CD8-positive, alpha-beta T cell (primary cell): ENCODE measurements at regions of chr6 and their contacts with region 1.

Region 1: DNA sequence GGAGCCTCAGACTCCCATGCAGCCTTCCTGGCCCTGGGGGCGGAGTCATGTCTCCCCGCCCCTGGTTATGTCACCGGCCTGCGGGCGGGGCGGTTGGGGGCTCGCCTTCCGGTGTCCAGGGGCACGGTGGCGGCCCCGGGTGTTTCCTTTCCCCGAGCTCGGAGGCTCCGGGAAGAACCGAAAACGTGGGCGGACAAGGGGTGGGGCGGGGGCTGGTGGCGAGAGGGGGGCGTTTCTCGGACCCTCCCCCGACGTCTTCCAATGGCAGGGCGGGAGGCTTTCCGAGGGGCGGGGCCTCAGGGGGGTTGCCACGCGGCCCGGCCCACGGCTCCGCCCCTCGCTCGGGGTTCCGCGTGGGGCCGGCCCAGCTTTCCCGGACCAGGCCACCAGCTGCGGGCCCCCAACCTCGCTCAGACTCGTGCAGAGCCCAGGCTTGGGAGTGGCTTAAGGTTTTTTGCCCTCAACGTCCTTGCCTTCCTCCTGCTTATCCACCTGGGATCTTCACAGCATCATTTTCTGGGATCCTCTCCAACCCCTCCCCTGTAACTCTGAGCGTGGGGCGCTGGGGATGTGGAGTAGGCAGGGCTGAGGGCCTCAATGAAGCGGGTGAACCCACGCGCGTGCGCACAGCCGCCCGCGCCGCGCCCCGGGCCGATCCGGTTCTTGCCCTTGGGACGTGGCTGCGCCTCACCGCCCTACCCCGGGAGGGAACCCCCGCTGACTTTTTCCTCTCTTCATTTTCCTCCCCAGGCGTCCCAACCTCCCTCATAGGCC is 2.1 kb upstream of the NRN1 start:
- DNase-seq: peak in 4 of 9 experiments; percentile 29 to 64 (median 46)
- ATAC-seq: peak; percentile 47
- H3K4me3 ChIP-seq: peak overlapping the region; percentile 44 to 47
- H3K4me3 Mint-ChIP-seq: peak overlapping the region; percentile 64
- H3K27ac ChIP-seq: no peak overlapping the region
- H3K27ac Mint-ChIP-seq: no peak overlapping the region
- H3K4me1 ChIP-seq: peaks cover 39% of the 10 kb centered on the region
- H3K4me1 Mint-ChIP-seq: peaks cover 37% of the 10 kb centered on the region
- H3K27me3 ChIP-seq: peaks cover 45 to 46% of the 10 kb centered on the region in 2 experiments
- H3K27me3 Mint-ChIP-seq: peaks cover 70% of the 10 kb centered on the region
- CTCF ChIP-seq: no peak

Region 2: GRCh38 chr6:5464099-5464885 is 544.5 kb before region 1 on chr6:
- CTCF ChIA-PET with region 1: no interaction called
- POLR2A ChIA-PET with region 1: no interaction called
- intact Hi-C with region 1: no loop called
- DNase-seq: no peak
- ATAC-seq: no peak
- H3K4me3 ChIP-seq: no peak overlapping the region
- H3K4me3 Mint-ChIP-seq: no peak overlapping the region
- H3K27ac ChIP-seq: no peak overlapping the region
- H3K27ac Mint-ChIP-seq: no peak overlapping the region
- H3K4me1 ChIP-seq: peaks cover 4% of the 10 kb centered on the region
- H3K4me1 Mint-ChIP-seq: peaks cover 14% of the 10 kb centered on the region
- H3K27me3 ChIP-seq: no peaks in the 10 kb centered on the region
- H3K27me3 Mint-ChIP-seq: no peaks in the 10 kb centered on the region
- CTCF ChIP-seq: no peak

Region 3: DNA sequence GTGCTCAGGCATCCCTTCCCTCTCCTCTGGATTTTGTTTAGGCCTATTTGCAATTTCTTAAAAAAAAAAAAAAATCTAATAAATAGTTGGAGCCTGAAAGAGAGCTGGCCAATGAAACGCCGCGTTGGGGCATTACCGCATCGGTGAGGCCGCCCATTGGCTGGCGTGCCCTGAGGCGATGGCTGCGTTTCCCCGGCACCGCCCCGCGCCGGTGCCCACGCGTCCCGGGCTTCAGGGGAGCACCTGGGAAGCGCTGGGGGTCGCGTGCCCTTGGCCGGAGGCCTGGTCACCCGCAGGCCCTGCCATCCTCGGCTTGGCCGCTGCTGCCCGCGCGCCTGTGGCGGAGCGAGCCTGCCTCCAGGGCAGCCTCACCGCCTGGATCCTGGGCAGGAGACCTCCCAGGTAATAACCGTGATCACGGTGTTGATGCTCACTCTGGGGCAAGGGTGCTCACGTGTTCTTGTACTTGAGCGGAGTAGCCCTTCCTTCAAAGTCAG is 157.5 kb before region 1 on chr6:
- CTCF ChIA-PET with region 1: no interaction called
- POLR2A ChIA-PET with region 1: no interaction called
- intact Hi-C with region 1: loop called in 1 of 2 experiments (anchors 5 kb)
- DNase-seq: peak; percentile 36 to 83 (median 67)
- ATAC-seq: peak; percentile 98
- H3K4me3 ChIP-seq: peak overlapping the region; percentile 59 to 71
- H3K4me3 Mint-ChIP-seq: peak overlapping the region; percentile 81
- H3K27ac ChIP-seq: peak overlapping the region; percentile 46 to 63
- H3K27ac Mint-ChIP-seq: peak overlapping the region; percentile 49
- H3K4me1 ChIP-seq: peaks cover 12% of the 10 kb centered on the region
- H3K4me1 Mint-ChIP-seq: peaks cover 7% of the 10 kb centered on the region
- H3K27me3 ChIP-seq: no peaks in the 10 kb centered on the region
- H3K27me3 Mint-ChIP-seq: peaks cover 2% of the 10 kb centered on the region
- CTCF ChIP-seq: no peak

Region 4: GRCh38 chr6:5995949-5996713 is 12.7 kb before region 1 on chr6:
- CTCF ChIA-PET with region 1: interaction called, 3 read pairs
- POLR2A ChIA-PET with region 1: interaction called, 3 read pairs
- intact Hi-C with region 1: loop called in 1 of 2 experiments (anchors 1 kb)
- DNase-seq: peak in 2 of 9 experiments; percentile 21 to 35
- ATAC-seq: peak; percentile 22
- H3K4me3 ChIP-seq: peak overlapping the region; percentile 52 to 59
- H3K4me3 Mint-ChIP-seq: peak overlapping the region; percentile 92
- H3K27ac ChIP-seq: no peak overlapping the region
- H3K27ac Mint-ChIP-seq: no peak overlapping the region
- H3K4me1 ChIP-seq: peaks cover 52% of the 10 kb centered on the region
- H3K4me1 Mint-ChIP-seq: peaks cover 51% of the 10 kb centered on the region
- H3K27me3 ChIP-seq: peaks cover 69 to 77% of the 10 kb centered on the region in 2 experiments
- H3K27me3 Mint-ChIP-seq: peaks cover 75% of the 10 kb centered on the region
- CTCF ChIP-seq: no peak

Region 5: GRCh38 chr6:6686748-6687601 is 678.1 kb after region 1 on chr6:
- CTCF ChIA-PET with region 1: no interaction called
- POLR2A ChIA-PET with region 1: no interaction called
- intact Hi-C with region 1: no loop called
- DNase-seq: peak in 3 of 9 experiments; percentile 24 to 55 (median 33)
- ATAC-seq: no peak
- H3K4me3 ChIP-seq: no peak overlapping the region
- H3K4me3 Mint-ChIP-seq: no peak overlapping the region
- H3K27ac ChIP-seq: no peak overlapping the region
- H3K27ac Mint-ChIP-seq: no peak overlapping the region
- H3K4me1 ChIP-seq: no peaks in the 10 kb centered on the region
- H3K4me1 Mint-ChIP-seq: peaks cover 13% of the 10 kb centered on the region
- H3K27me3 ChIP-seq: no peaks in the 10 kb centered on the region
- H3K27me3 Mint-ChIP-seq: no peaks in the 10 kb centered on the region
- CTCF ChIP-seq: no peak